ENCODE measurements at regions of chr5 and their contacts with region 1.

Region 1: DNA sequence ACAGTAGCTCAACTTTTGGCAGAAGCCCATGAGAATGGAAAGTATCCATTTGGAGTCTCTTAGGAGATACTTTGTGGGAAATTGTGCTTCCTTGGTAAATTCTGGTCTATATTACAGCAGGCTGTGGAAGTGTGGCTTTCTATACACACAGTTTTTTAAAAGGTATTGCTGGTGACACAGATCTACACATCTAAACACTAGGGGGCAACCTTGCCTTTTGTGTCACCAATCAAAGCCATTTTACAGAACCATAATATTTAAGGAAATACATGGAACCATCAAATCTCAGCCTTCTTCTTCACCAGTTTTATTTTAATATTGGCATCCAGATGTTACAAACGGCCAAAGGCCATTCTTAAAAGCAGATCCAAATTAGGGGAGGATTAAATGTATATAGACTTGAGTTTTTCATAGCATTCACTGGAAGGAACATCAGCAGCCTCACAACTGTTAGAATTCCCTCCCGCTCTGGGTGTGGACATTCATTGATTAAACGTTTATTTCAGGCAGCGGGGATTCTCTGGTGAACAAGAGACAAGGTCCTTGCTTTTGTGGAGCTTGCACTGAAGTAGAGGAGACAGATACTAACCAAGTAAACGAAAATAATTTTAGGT is 132.4 kb upstream of the EPB41L4A start:
- DNase-seq: peak; percentile 67
- H3K4me3 ChIP-seq: no peak overlapping the region
- H3K27ac ChIP-seq: no peak overlapping the region
- H3K4me1 ChIP-seq: no peaks in the 10 kb centered on the region
- H3K27me3 ChIP-seq: peaks cover 0 to 4% of the 10 kb centered on the region in 2 experiments
- CTCF ChIP-seq: peak; percentile 42 to 58
- POLR2A ChIP-seq: no peak

Region 2: GRCh38 chr5:112228667-112229066 is 322.9 kb before region 1 on chr5:
- CTCF ChIA-PET with region 1: no interaction called
- POLR2A ChIA-PET with region 1: no interaction called
- dilution Hi-C with region 1: no loop called
- intact Hi-C with region 1: no loop called
- DNase-seq: peak; percentile 69
- H3K4me3 ChIP-seq: no peak overlapping the region
- H3K27ac ChIP-seq: no peak overlapping the region
- H3K4me1 ChIP-seq: peaks cover 5% of the 10 kb centered on the region
- H3K27me3 ChIP-seq: no peaks in the 10 kb centered on the region
- CTCF ChIP-seq: no peak
- POLR2A ChIP-seq: no peak

Region 3: DNA sequence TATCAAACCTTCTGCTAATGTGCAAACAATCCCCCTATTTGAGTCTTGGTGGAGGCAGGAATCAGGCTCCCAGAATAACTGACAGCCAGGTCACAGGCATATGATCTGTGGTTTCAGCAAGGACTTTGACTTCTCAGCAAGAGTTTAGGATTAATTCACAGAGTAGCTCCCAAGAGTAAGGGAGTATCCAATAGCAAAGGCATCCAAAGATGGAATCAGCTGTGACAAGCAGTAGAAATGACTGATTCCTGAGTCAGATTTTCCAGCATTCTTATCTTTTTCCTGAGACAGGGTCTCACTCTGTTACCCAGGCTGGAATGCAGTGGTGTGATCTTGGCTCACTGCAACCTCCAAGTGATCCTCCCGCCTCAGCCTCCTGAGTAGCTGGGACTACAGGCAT is 240.8 kb before region 1 on chr5:
- CTCF ChIA-PET with region 1: no interaction called
- POLR2A ChIA-PET with region 1: no interaction called
- dilution Hi-C with region 1: no loop called
- intact Hi-C with region 1: no loop called
- DNase-seq: no peak
- H3K4me3 ChIP-seq: no peak overlapping the region
- H3K27ac ChIP-seq: no peak overlapping the region
- H3K4me1 ChIP-seq: no peaks in the 10 kb centered on the region
- H3K27me3 ChIP-seq: no peaks in the 10 kb centered on the region
- CTCF ChIP-seq: no peak
- POLR2A ChIP-seq: no peak

Region 4: DNA sequence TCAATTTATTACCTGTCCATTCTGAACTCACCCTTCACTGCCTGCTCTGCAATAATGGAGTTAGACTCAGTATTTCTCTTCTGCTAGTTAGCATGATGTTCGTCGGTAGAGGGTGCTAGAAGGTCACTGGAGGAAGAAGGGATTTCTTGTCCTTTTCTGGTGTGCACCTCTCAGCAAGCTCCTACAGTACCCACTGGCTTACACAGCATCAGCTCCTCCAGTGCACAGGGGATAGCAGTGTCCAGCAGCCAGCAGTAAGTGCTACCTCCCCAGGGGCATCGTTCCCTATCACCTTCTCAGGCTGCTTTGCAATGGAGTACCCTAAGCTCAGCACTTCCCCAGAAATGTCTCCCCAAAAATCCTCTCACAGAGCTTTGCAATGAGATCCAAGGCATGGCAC is 140.2 kb after region 1 on chr5:
- CTCF ChIA-PET with region 1: interaction called, 3 read pairs
- POLR2A ChIA-PET with region 1: no interaction called
- dilution Hi-C with region 1: no loop called
- intact Hi-C with region 1: loop called (anchors 10 kb)
- DNase-seq: peak; percentile 43
- H3K4me3 ChIP-seq: no peak overlapping the region
- H3K27ac ChIP-seq: no peak overlapping the region
- H3K4me1 ChIP-seq: no peaks in the 10 kb centered on the region
- H3K27me3 ChIP-seq: peaks cover 10 to 12% of the 10 kb centered on the region in 2 experiments
- CTCF ChIP-seq: peak; percentile 33 to 41
- POLR2A ChIP-seq: no peak

Region 5: DNA sequence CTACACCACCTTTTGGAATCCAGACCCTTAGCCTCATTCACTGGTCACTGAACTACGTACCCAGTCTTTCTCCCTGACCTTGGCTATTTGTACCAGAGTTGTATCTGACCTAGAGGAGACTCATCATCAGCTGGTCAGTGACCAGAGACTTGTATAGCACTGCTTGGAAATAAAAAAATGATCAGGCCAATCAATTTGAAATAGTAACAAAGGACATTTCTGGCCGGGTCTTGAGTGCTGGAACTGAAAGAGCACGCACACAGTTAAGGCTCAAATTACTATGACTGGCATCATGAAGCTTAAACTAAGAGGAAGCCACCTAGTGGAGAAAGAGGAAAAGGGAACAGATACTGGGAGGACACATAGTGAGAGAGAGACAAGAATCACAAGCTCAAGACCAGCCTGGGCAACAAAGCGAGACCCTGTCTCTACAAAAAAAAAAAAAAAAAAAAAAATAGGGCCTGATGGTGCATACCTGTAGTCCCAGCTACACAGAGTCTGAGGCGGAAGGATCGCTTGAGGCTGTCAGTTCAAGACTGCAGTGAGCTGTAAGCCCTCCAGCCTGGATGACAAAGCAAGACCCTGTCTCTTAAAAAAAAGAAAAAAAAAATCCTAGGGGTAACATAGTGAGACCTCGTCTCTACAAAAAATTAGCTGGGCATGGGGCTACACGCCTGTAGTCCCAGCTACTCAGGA is 296.7 kb after region 1 on chr5:
- CTCF ChIA-PET with region 1: interaction called, 46 read pairs
- POLR2A ChIA-PET with region 1: no interaction called
- dilution Hi-C with region 1: no loop called
- intact Hi-C with region 1: loop called (anchors 1 kb)
- DNase-seq: peak; percentile 68
- H3K4me3 ChIP-seq: no peak overlapping the region
- H3K27ac ChIP-seq: no peak overlapping the region
- H3K4me1 ChIP-seq: no peaks in the 10 kb centered on the region
- H3K27me3 ChIP-seq: no peaks in the 10 kb centered on the region
- CTCF ChIP-seq: peak; percentile 52 to 69
- POLR2A ChIP-seq: no peak

Region 6: GRCh38 chr5:112921833-112922817 is 370.6 kb after region 1 on chr5 and contains the start of gene REEP5:
- CTCF ChIA-PET with region 1: interaction called, 4 read pairs
- POLR2A ChIA-PET with region 1: no interaction called
- dilution Hi-C with region 1: no loop called
- intact Hi-C with region 1: loop called (anchors 1 kb)
- DNase-seq: peak; percentile 83
- H3K4me3 ChIP-seq: peak within 1 kb of the TSS; percentile 53 to 99 (median 78)
- H3K27ac ChIP-seq: peak within 1 kb of the TSS; percentile 66
- H3K4me1 ChIP-seq: peaks cover 8% of the 10 kb centered on the region
- H3K27me3 ChIP-seq: no peaks in the 10 kb centered on the region
- CTCF ChIP-seq: peak; percentile 74 to 80
- POLR2A ChIP-seq: peak; percentile 89
- total RNA-seq, gene REEP5: 84.5 and 98.0 TPM in 2 replicates

Region 7: GRCh38 chr5:112968411-112969106 is 417.0 kb after region 1 on chr5:
- CTCF ChIA-PET with region 1: interaction called, 3 read pairs
- POLR2A ChIA-PET with region 1: no interaction called
- dilution Hi-C with region 1: no loop called
- intact Hi-C with region 1: loop called (anchors 1 kb)
- DNase-seq: no peak
- H3K4me3 ChIP-seq: no peak overlapping the region
- H3K27ac ChIP-seq: no peak overlapping the region
- H3K4me1 ChIP-seq: peaks cover 4% of the 10 kb centered on the region
- H3K27me3 ChIP-seq: no peaks in the 10 kb centered on the region
- CTCF ChIP-seq: no peak
- POLR2A ChIP-seq: no peak

Region 8: DNA sequence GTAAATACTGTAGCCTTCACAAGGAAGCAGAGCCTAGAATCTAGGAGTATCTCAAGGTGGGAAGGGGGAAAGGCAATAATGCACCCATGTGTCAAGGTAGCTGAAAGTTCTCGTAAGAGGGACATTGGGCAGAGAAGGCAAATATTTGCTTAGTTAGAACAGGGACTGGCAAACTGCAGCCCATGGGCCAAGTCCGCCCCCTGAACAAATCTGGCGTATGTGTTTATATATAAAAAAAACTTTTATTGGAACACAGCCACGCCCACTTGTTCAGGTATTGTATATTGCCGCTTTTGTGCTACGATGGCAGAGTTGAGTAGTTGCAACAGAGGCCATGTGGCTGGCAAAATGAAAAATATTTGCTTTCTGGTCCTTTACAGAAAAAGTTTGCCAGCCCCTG is 1826.4 kb after region 1 on chr5:
- CTCF ChIA-PET with region 1: no interaction called
- POLR2A ChIA-PET with region 1: no interaction called
- dilution Hi-C with region 1: no loop called
- intact Hi-C with region 1: loop called (anchors 5 kb)
- DNase-seq: no peak
- H3K4me3 ChIP-seq: no peak overlapping the region
- H3K27ac ChIP-seq: no peak overlapping the region
- H3K4me1 ChIP-seq: no peaks in the 10 kb centered on the region
- H3K27me3 ChIP-seq: peaks cover 0 to 2% of the 10 kb centered on the region in 2 experiments
- CTCF ChIP-seq: no peak
- POLR2A ChIP-seq: no peak

Measured in endothelial cell of umbilical vein (primary cell).